Transverse colon (tissue), 4 donors: ENCODE measurements at regions of chr10 and their contacts with region 1.

Region 1: DNA sequence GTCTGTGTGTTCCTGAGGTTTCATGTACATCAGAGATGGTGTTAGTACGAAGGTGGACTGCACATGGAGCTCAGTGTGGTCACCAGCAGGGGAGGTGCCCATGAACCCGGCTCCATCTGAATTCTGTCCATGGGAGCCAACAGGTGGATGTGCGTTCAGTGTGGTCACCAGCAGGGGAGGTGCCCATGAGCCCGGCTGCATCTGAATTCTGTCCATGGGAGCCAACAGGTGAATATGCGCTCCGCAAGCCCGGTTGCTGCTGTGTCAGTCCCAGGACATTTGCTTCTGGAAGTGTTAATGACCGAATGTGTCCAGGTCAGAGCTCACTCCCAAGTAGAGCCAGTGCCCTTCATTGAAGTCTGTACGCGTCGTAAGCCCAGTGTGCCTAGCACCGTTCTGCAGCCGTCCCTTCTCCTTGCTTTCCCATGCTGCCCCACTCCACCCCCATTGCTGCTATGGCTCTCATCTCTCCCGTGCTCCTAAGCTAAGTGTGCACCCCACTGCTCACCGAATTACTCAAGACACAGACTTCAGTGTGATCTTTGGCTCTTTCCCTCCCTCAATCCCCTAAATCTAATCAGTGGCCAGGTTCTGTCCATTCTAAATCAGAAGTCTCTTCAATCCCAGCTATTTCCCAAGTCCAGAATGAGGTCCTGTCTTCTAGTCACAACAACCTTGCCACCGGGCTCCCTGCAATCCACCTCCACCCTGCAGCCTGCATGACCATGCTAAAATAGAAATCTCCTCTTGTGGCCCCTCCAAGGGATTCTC is 352.4 kb downstream of the TCERG1L start:
- DNase-seq: no peak
- H3K4me3 ChIP-seq: no peak overlapping the region
- H3K27ac ChIP-seq: no peak overlapping the region
- H3K4me1 ChIP-seq: no peaks in the 10 kb centered on the region
- H3K27me3 ChIP-seq: no peaks in the 10 kb centered on the region
- CTCF ChIP-seq: no peak
- EP300 ChIP-seq: no peak
- POLR2A ChIP-seq: no peak

Region 2: GRCh38 chr10:130631142-130632096 is 327.7 kb before region 1 on chr10:
- in situ Hi-C with region 1: no loop called
- intact Hi-C with region 1: no loop called
- DNase-seq: peak; percentile 20
- H3K4me3 ChIP-seq: no peak overlapping the region
- H3K27ac ChIP-seq: no peak overlapping the region
- H3K4me1 ChIP-seq: no peaks in the 10 kb centered on the region
- H3K27me3 ChIP-seq: no peaks in the 10 kb centered on the region
- CTCF ChIP-seq: no peak
- EP300 ChIP-seq: no peak
- POLR2A ChIP-seq: no peak

Region 3: GRCh38 chr10:130923596-130923995 is 35.6 kb before region 1 on chr10:
- in situ Hi-C with region 1: no loop called
- intact Hi-C with region 1: loop called (anchors 1 kb)
- DNase-seq: no peak
- H3K4me3 ChIP-seq: no peak overlapping the region
- H3K27ac ChIP-seq: no peak overlapping the region
- H3K4me1 ChIP-seq: no peaks in the 10 kb centered on the region
- H3K27me3 ChIP-seq: no peaks in the 10 kb centered on the region
- CTCF ChIP-seq: no peak
- EP300 ChIP-seq: no peak
- POLR2A ChIP-seq: no peak